GM23248 (cell line): ENCODE measurements at regions of chr5 and their contacts with region 1.

Region 1: GRCh38 chr5:115888027-115888426 is 46.3 kb downstream of the AP3S1 start:
- DNase-seq: peak; percentile 61
- H3K4me3 ChIP-seq: no peak overlapping the region
- H3K27ac ChIP-seq: no peak overlapping the region
- H3K4me1 ChIP-seq: no peaks in the 10 kb centered on the region
- H3K27me3 ChIP-seq: no peaks in the 10 kb centered on the region

Region 2: DNA sequence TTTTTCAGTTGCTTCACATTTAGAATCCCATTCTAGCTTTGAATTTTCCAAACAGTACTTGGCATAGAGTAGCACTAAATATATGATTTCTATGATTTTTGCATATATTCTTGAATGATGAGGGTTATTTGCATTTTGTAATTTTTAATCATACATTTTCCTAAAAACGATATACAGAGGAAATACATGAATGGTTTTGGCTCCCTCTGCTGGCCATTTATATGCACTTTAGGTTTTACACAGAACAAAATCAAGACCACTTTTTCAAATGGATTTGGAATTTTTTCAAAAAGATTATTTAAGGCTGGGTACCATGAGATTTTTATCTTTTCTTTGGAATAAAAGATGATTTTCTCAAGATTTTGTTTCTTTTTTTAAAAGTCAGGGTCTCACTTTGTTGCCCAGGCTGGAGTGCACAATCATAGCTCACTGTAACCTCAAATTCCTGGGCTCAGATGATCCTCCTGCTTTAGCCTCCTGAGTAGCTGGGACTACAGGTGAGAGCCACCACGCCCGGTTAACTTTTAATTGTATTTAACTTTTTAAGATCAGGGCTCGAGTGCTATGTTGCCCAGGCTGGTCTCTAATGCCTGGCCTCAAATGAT is 180.1 kb after region 1 on chr5:
- in situ Hi-C with region 1: loop called (anchors 10 kb)
- DNase-seq: peak; percentile 75
- H3K4me3 ChIP-seq: no peak overlapping the region
- H3K27ac ChIP-seq: no peak overlapping the region
- H3K4me1 ChIP-seq: no peaks in the 10 kb centered on the region
- H3K27me3 ChIP-seq: no peaks in the 10 kb centered on the region